GM10248 (cell line): ENCODE measurements at regions of chr22 and their contacts with region 1.

Region 1: DNA sequence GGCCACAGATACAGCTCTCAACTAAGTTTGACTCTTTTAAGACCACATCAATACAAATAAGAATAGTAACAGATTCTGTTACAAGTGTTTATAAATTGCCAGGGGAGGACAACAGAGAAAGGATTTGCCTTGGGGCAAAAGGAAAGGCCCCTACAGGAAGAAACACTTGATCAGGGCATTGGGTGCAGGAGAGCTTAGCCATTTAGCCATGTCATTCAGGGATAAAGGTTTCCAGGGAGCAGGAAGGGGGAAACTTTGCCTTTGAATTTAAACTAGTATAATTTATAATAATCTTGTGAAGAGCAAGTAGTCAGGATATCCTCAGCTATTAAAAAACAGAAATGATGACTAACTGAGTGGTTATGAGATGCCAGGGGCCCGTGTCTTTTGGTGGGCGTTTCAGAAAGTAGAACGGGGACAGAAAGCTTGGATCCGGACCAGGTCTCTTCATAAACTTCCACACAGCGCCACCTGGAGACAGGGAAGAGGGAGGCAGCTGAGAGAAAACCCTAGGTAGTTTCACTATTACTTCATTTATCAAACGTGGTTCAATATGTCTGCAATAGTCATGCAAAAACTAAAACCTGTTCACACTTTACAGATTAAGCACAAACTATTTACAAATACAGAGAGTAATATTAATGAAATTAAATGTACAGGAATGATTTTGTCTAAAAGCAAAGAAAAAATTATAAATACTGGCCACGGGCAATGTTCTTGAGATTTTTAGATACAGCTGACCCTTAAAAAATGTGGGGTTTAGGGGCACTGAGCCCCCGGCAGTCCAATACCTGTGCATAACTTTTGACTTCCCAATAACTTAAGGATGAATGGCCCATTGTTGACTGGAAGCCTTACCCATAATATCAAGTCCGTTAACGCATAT is 11.0 kb upstream of the SLC5A4 start:
- DNase-seq: peak; percentile 71
- CTCF ChIP-seq: peak; percentile 85

Region 2: GRCh38 chr22:31977141-31977841 is 288.8 kb before region 1 on chr22:
- CTCF ChIA-PET with region 1: interaction called, 17 read pairs
- POLR2A ChIA-PET with region 1: no interaction called
- DNase-seq: peak; percentile 79
- CTCF ChIP-seq: peak; percentile 74

Region 3: DNA sequence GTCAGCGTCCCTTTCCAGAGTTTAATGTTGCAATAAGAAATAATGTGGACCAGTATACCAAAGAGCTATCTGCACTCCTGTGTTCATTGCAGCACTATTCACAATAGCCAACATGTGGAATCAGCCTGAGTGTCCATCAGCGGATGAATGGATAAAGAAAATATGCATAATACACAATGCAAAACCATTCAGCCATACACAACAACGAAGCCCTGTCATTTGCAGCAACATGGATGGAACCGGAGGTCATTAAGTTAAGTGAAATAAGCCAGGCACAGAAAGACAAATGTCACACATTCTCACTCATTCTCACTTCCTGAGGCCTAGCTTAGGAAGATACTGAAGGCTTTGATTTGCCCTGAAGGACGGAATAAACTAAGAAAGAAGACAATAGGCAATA is 33.0 kb before region 1 on chr22:
- CTCF ChIA-PET with region 1: interaction called, 12 read pairs
- POLR2A ChIA-PET with region 1: no interaction called
- DNase-seq: no peak
- CTCF ChIP-seq: no peak

Region 4: GRCh38 chr22:32281072-32281471 is 14.9 kb after region 1 on chr22:
- CTCF ChIA-PET with region 1: interaction called, 11 read pairs
- POLR2A ChIA-PET with region 1: no interaction called
- DNase-seq: no peak
- CTCF ChIP-seq: no peak

Region 5: DNA sequence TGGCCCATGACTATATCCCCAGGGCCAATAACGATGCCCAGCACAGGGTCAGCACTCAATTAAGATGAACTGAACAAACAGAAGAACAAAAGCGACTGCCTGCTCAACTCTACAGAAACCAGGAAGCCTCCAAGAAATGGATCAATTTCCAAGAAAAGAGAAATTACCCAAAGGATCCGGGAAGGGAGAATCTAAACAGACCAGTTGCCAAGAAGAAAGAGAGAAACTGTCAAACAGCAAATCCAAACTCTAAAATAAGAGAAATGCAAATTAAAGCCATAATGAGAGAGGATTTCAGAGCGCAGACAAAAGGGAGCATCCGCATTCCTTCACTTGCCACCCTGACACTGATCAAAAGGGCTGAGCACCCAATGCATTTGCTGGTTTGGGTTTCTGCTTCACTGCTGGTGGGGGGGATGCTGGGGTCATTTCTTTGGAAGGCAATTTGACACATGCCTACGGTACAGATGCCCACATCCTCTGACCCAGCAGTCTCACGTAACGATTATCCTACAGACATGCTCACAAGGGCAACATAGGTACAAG is 53.8 kb after region 1 on chr22:
- CTCF ChIA-PET with region 1: no interaction called
- POLR2A ChIA-PET with region 1: no interaction called
- DNase-seq: no peak
- CTCF ChIP-seq: no peak

Region 6: DNA sequence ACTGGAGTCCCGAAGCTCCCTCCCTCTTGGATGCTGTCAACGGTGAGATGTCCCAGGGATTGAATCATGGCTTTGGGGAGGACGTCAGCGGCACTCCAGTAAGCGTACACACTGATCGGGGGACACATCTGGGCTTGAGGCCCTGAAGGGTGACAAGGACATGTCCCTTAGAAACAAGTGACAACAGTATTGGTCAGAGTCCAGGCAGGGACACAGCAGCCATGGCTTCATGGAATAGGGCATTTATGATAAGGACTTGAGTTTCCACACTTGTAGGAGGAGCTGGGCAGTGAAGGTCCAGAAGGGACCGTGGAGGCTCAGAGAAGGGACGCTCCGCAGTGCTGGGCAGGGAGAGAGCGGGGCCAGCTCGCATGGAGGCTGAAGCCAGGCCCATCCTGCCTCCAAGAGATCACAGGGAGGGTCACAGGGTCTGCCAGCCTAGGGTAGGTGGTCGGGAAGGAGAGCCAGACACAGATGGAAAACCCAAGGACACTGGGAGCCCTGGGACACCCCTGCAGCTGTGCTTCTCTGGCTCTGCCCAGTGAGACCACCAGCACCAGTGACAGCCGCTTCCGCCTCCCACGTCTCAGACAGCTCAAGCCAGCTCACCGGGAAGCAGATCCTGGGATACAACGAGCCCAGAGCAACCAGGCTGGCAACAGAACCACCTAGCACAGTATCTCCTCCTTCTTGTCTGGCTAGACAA is 68.7 kb after region 1 on chr22:
- CTCF ChIA-PET with region 1: no interaction called
- POLR2A ChIA-PET with region 1: no interaction called
- DNase-seq: no peak
- CTCF ChIP-seq: no peak

Region 7: GRCh38 chr22:32501836-32502745 is 236.0 kb after region 1 on chr22:
- CTCF ChIA-PET with region 1: no interaction called
- POLR2A ChIA-PET with region 1: no interaction called
- DNase-seq: no peak
- CTCF ChIP-seq: no peak